ENCODE measurements at regions of chr15 and their contacts with region 1.

Region 1: DNA sequence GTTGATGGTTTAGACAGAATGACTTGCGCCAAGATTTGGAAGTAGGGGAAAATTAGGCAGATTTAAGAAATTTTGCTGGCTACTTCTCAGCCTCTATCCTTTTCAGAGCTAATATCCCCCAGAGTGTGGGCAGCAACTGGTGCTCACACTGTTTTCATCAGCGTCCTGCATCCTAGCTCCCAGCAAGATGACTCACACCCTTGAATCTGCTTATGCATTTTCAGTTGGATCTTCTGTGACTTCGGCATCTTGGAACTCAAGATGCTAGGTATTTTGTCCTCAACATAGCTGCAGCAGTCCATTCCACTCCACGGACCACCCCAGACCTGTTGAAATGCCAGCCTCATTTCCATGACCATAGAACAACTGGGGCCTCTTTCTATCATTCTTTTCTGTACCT is 336.1 kb upstream of the NR2F2 start:
- DNase-seq: no peak
- ATAC-seq: no peak

Region 2: GRCh38 chr15:95829062-95829461 is 165.4 kb before region 1 on chr15:
- intact Hi-C with region 1: no loop called
- DNase-seq: no peak
- ATAC-seq: no peak

Region 3: GRCh38 chr15:95957861-95958260 is 36.6 kb before region 1 on chr15:
- intact Hi-C with region 1: loop called (anchors 1 kb)
- DNase-seq: no peak
- ATAC-seq: no peak

Region 4: DNA sequence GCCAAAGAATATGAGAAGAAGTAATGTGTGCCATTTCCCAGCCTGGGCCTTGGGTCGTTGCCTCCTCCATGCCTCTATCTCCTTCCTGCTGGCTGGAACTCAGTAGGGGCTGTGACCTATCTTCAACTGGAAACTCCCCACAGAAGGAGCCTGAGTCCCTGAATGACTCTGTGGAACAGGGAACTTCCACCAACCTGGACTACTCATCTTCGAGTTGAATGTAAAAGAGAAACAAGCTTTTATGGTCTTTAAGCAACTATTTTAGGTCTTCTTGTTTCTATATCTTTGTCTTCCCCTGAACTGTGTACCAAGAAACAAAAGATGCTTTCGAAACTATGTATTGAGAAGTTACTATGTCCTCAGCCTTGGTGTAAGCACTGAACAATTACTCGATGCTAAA is 19.2 kb before region 1 on chr15:
- intact Hi-C with region 1: loop called (anchors 1 kb)
- DNase-seq: no peak
- ATAC-seq: no peak

Measured in sciatic nerve (tissue), 2 donors.